Psoas muscle (tissue), 8 donors: ENCODE measurements at regions of chr9 and their contacts with region 1.

Region 1: DNA sequence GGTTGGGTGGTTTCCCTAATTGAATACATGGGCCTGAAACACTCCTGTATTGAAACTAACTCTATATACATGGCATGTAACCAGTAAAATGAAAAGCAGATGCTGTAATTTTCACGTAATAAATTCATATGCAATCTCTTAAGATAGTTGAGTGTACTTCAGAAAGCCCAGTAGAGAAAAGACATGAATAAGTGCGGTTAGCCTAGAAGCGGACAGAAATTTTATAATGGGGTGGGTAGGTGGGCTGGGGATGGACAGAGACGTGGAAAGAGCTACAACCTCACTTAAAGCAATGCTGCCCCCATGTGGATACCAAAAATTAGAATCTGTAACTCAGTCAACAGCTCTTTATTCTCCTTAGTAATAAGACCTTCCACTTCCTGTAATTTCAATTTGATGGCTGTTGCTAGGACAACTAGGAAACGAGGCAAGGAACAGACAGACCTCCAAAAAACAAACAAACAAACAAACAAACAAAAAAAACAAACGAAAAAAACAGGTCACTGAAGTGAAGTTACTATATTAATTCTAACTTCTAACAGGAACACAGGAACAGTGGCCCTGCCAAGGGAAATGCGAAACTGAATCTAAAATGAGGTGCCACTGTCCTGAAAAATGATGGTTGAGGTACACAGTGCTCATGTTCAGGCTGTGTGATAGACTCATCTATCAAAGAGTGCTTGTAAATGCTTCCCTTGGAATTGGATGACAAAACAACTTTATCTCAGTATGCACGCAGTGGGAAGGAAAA is 103.4 kb upstream of the GNA14 start:
- DNase-seq: no peak
- ATAC-seq: peak; percentile 48 to 79 (median 71)
- H3K4me3 ChIP-seq: no peak overlapping the region
- H3K27ac ChIP-seq: no peak overlapping the region
- H3K4me1 ChIP-seq: no peaks in the 10 kb centered on the region
- H3K27me3 ChIP-seq: no peaks in the 10 kb centered on the region
- CTCF ChIP-seq: peak; percentile 55

Region 2: GRCh38 chr9:77433675-77434445 is 317.7 kb before region 1 on chr9:
- intact Hi-C with region 1: loop called (anchors 2 to 10 kb)
- DNase-seq: peak; percentile 50 to 68
- ATAC-seq: peak; percentile 70 to 90 (median 81)
- H3K4me3 ChIP-seq: no peak overlapping the region
- H3K27ac ChIP-seq: no peak overlapping the region
- H3K4me1 ChIP-seq: no peaks in the 10 kb centered on the region
- H3K27me3 ChIP-seq: peaks cover 0 to 3% (median 0%) of the 10 kb centered on the region in 3 donors
- CTCF ChIP-seq: peak; percentile 92

Region 3: DNA sequence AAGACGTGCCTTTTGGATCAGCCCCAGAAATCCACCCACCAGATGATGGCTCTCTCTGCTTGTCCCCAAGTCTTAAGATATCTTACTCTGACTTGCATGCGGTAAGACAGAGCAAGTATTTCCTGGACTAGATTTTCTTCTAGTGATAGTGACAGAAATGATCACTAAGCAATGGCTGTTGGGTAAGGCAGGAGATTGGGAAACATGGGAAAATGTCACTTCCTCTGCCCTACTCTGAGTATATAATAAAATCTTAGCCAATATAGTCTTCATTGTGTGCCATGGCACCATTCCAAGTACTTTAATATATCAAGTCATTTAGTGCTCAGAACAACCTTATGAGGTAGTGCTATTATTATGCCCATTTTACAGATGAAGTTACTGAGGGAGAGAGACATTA is 72.4 kb before region 1 on chr9:
- intact Hi-C with region 1: no loop called
- DNase-seq: no peak
- ATAC-seq: no peak
- H3K4me3 ChIP-seq: no peak overlapping the region
- H3K27ac ChIP-seq: no peak overlapping the region
- H3K4me1 ChIP-seq: no peaks in the 10 kb centered on the region
- H3K27me3 ChIP-seq: no peaks in the 10 kb centered on the region
- CTCF ChIP-seq: no peak

Region 4: DNA sequence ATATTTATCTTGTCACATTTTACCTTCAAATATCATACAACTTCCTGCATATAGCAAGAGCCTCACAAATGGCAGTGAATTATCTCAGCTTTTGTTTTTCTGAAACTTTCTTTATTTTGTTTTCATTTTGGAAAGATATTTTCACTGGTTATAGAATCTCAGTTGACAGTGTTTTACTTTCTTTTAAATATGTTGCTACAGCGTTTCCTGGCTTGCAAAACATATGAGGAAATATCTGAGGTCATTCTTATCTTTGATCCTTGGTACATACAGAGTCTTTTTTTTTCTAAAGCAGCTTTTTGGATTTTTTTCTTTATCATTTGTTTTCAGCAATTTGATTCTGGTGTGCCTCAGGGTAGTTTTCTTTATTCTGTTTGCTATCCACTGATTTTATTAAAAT is 406.8 kb after region 1 on chr9:
- intact Hi-C with region 1: no loop called
- DNase-seq: no peak
- ATAC-seq: no peak
- H3K4me3 ChIP-seq: no peak overlapping the region
- H3K27ac ChIP-seq: no peak overlapping the region
- H3K4me1 ChIP-seq: no peaks in the 10 kb centered on the region
- H3K27me3 ChIP-seq: no peaks in the 10 kb centered on the region
- CTCF ChIP-seq: no peak